ENCODE measurements at regions of chr16 and their contacts with region 1.

Region 1: DNA sequence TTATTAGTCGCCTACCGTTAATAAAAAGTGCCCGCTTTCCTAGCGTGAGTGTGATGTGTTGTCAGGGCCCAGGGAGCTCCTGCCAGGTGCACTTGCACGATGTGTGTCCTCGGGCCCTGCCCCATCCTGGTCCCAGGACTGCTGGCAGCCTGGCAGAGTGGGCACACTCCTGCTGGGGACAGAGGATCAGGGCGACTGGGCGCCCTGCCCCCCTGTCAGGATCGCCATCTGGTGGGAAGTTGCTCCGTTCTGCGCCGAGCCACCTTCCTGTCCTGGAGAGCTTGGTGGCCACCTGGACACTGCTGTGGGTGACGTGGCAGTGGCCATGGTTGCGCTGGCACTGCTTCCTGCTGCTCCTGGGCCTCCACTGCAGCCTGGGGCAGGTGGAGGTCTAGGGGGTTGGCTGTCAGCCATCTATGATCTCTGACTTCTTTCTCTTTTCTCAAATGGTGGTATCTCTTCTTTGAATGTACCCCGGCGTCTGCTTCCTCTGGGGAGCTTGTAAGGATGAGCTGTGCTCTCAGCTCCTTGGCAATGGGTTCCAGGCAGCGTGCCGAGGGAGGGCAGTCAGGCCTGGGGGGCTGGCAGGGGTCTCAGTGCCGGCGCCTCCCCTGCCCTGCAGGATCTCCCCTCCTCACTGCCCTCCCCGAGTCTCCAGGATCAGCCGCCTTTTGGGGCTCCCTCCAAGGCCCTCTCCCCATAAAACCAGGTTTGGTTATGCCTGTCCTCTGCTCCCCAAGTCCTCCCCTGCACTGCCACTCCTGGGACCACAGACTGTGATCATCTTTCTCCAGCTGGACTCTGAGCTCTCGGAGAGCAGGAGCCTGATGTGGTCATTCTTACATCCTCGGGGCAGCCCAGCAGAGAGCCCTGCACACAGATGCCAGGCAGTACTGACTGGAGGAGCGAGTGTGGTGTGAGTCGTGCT is 76.9 kb downstream of the AMFR start:
- DNase-seq: no peak
- H3K4me3 Mint-ChIP-seq: no peak overlapping the region
- H3K27ac Mint-ChIP-seq: no peak overlapping the region
- H3K4me1 Mint-ChIP-seq: peaks cover 10% of the 10 kb centered on the region
- H3K27me3 Mint-ChIP-seq: peaks cover 14% of the 10 kb centered on the region
- CTCF ChIP-seq: no peak

Region 2: DNA sequence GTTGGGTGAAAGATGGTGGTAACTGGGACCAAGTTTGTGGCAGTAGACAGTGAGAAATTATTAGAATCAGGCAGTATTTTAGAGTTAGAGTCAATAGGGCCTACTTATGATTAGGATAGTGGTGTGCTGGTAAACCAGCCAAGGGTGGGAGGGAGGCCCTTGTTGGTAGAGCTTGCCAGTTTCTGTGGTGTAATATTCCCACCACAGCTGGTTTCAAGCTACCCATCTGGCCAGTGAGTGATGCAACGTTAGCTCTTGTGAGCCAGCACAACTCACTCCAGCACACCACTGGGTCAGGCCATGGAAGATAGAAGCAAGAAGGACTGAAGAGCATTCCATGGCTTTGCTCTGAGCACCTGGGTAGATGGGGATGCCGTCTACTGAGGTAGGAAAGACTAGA is 122.2 kb before region 1 on chr16:
- CTCF ChIA-PET with region 1: no interaction called
- POLR2A ChIA-PET with region 1: no interaction called
- intact Hi-C with region 1: no loop called
- DNase-seq: peak; percentile 45
- H3K4me3 Mint-ChIP-seq: no peak overlapping the region
- H3K27ac Mint-ChIP-seq: no peak overlapping the region
- H3K4me1 Mint-ChIP-seq: no peaks in the 10 kb centered on the region
- H3K27me3 Mint-ChIP-seq: peaks cover 44% of the 10 kb centered on the region
- CTCF ChIP-seq: no peak

Region 3: DNA sequence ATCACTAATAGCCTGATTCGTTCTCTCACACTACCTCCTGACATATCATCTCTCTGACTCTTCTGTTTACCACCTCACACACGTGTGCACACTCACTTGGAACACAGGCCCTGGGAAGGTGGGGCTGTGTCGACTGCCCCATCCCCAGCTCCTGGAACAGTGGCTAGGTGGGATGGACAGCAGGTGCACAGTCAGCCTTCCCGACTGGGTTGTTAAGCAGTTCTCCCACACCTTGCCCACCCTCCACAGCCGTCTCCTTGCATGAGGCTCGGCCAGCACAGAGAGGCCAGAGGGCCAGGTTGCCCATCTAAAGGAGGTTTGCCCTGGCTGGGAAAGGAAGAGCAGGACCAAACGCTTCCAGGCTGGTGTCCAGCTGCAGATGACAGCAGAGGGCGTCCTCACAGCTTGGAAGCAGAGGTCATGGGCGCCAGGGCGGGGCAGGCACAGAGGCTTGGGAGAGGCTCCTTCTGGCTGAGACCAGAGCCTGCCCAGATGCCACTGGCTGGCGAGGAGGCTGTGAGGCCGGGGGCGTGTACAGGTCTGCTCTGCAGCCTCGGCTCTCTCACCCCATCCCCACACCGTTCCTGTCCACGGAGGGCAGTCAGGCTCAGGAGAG is 15.8 kb before region 1 on chr16:
- CTCF ChIA-PET with region 1: interaction called, 18 read pairs
- POLR2A ChIA-PET with region 1: no interaction called
- intact Hi-C with region 1: no loop called
- DNase-seq: peak; percentile 88
- H3K4me3 Mint-ChIP-seq: no peak overlapping the region
- H3K27ac Mint-ChIP-seq: no peak overlapping the region
- H3K4me1 Mint-ChIP-seq: peaks cover 15% of the 10 kb centered on the region
- H3K27me3 Mint-ChIP-seq: no peaks in the 10 kb centered on the region
- CTCF ChIP-seq: peak; percentile 70

Measured in MCF 10A (cell line).